ENCODE measurements at regions of chr4 and their contacts with region 1.

Region 1: GRCh38 chr4:77600521-77601451 is 4.8 kb upstream of the CXCL13 start:
- DNase-seq: no peak
- ATAC-seq: 0 out of 2 replicates have a peak, but pooled peaks have one; percentile 60
- H3K4me3 ChIP-seq: no peak overlapping the region
- H3K27ac ChIP-seq: no peak overlapping the region
- H3K4me1 ChIP-seq: no peaks in the 10 kb centered on the region
- H3K27me3 ChIP-seq: no peaks in the 10 kb centered on the region
- CTCF ChIP-seq: peak; percentile 81

Region 2: DNA sequence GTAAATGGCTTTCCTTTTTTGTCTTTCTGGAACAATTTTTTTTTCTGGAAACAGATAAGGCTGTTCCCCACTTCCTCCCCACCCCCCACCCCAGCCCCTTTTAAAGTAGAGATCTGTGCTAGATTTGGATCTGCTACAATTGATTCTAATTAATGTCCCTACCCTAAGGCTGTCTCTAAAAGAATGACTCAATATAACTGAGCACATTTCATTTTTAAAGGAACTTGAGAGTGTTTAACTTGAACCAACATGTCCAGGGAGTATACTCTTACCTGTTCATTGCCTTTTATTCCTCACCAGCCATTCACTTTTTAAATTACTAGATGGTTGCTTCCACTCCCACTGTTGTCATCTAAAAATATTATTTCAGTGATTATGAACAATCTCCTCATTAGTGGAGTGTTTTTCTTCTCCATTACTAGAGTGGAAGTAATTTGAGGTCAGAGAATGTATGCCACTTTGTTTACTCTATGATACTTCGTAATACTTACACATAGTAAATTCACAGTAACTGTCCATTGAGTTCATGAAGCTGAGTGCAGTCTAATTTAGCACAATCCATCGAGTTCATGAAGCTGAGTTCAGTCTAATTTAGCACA is 232.4 kb after region 1 on chr4:
- CTCF ChIA-PET with region 1: interaction called, 14 read pairs
- POLR2A ChIA-PET with region 1: no interaction called
- in situ Hi-C with region 1: no loop called
- intact Hi-C with region 1: no loop called
- DNase-seq: no peak
- ATAC-seq: no peak
- H3K4me3 ChIP-seq: no peak overlapping the region
- H3K27ac ChIP-seq: no peak overlapping the region
- H3K4me1 ChIP-seq: no peaks in the 10 kb centered on the region
- H3K27me3 ChIP-seq: no peaks in the 10 kb centered on the region; the same call in 1 of the 2 replicates
- CTCF ChIP-seq: no peak

Measured in Panc1 (cell line).